ENCODE measurements at regions of chr5 and their contacts with region 1.

Region 1: GRCh38 chr5:52693280-52693679 is 94.4 kb upstream of the ITGA1 start:
- DNase-seq: peak; percentile 63
- ATAC-seq: no peak

Region 2: GRCh38 chr5:52748590-52748989 is 55.3 kb after region 1 on chr5:
- intact Hi-C with region 1: no loop called
- DNase-seq: no peak
- ATAC-seq: no peak

Region 3: GRCh38 chr5:52771343-52772039 is 78.2 kb after region 1 on chr5:
- intact Hi-C with region 1: loop called (anchors 5 kb)
- DNase-seq: no peak
- ATAC-seq: no peak

Region 4: GRCh38 chr5:52915176-52915875 is 222.0 kb after region 1 on chr5:
- intact Hi-C with region 1: loop called (anchors 5 kb)
- DNase-seq: peak; percentile 31
- ATAC-seq: peak; percentile 75

Measured in Right ventricle myocardium inferior (tissue), 1 donor.